ENCODE measurements at regions of chr5 and their contacts with region 1.

Region 1: DNA sequence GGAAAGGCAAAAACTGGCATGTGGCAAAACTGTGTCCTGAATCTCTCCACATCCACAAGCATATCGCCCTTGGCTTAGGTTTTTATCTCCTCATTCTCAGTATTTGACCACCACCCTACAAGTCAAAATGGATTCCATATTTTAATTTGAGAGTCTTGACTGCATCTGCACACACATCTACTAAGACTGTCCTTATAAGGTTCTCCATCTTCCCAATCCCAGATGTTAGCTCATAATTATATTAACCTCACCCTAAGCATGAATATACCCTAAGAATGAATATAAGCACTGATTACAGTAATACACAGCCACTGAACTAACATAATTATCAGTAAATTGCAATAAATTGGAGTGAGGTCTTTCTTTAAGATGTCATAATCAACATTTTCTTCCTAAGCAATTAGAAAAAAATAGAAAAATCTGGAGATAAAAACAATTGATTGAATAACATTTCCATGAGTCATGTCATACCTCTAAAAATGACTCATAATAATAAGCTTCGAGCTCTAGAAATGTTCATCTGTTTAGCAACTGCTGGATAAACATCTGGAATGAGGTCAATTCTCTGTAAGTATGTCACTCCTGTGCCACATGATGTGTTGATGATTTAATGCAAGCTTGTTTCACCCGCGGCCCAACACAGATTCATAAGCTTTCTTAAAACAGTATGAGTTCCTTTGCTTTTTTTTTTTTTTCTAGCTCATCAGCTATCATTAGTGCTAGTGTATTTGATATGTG is 39.9 kb upstream of the PAM start:
- DNase-seq: no peak
- H3K4me3 ChIP-seq: no peak overlapping the region
- H3K27ac ChIP-seq: no peak overlapping the region
- H3K4me1 ChIP-seq: no peaks in the 10 kb centered on the region
- H3K27me3 ChIP-seq: no peaks in the 10 kb centered on the region
- CTCF ChIP-seq: no peak
- POLR2A ChIP-seq: no peak

Region 2: DNA sequence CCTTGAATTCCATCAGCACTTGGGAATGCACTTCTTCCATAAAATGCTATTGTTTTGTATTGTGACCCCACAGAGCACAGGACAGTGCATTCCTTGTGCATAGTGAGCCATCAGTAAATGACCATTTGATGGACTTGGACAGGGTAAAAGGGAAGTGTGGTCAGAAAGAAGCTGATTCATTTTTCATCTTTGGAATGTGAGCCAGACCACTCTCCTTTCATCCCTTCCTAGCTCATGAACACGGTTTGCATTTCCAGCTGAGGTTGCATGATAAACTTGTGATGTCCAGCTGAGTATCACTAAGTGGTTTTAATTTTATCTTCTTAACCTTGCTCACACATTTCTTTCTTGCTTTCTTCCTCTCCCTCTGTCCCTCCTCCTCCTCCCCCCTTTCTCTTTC is 746.0 kb after region 1 on chr5:
- intact Hi-C with region 1: loop called (anchors 10 kb)
- DNase-seq: no peak
- H3K4me3 ChIP-seq: no peak overlapping the region
- H3K27ac ChIP-seq: no peak overlapping the region
- H3K4me1 ChIP-seq: no peaks in the 10 kb centered on the region
- H3K27me3 ChIP-seq: no peaks in the 10 kb centered on the region
- CTCF ChIP-seq: no peak
- POLR2A ChIP-seq: no peak